CD14-positive monocyte (primary cell): ENCODE measurements at regions of chr6 and their contacts with region 1.

Region 1: DNA sequence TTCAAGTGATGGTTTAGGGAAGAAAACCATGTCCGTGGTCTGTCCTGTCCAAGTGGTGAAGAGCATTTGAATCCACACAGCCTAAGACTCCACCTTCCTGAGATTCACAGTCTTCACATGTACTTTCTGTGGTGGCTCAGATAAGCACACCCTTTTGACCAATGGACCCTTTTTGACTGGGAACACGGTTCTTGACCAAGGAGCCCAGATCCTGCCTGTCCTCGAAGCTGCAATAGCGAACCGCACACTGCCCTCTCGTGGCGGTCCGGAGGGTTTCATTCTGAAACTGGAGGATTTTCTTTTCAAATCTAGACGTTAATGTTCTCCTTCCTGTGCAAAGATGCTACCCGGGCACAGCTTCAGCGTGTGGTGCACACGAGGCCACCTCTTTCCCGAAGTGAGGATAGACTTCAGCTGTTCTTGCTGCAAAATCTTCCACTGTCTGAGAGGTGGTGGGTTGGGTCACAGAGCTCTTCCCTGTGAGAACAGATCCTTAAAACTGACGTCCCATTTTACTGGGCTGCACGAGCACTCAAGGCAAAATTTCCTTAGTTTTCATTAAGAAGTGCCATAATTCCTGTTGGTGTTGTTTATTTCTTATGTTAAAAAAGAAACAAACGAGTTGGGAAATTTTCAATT is 90.5 kb downstream of the SYNJ2 start:
- DNase-seq: peak; percentile 59 to 73 (median 72)
- H3K4me3 ChIP-seq: no peak overlapping the region
- H3K4me3 Mint-ChIP-seq: peak overlapping the region in 1 of 2 donors; percentile 48
- H3K27ac ChIP-seq: no peak overlapping the region
- H3K27ac Mint-ChIP-seq: peak overlapping the region in 4 of 7 donors; percentile 61 to 81 (median 70)
- H3K4me1 ChIP-seq: peaks cover 18 to 19% of the 10 kb centered on the region in 2 donors
- H3K4me1 Mint-ChIP-seq: peaks cover 20% of the 10 kb centered on the region
- H3K27me3 ChIP-seq: no peaks in the 10 kb centered on the region
- H3K27me3 Mint-ChIP-seq: peaks cover 0 to 3% (median 0%) of the 10 kb centered on the region in 3 donors
- CTCF ChIP-seq: peak; percentile 90

Region 2: DNA sequence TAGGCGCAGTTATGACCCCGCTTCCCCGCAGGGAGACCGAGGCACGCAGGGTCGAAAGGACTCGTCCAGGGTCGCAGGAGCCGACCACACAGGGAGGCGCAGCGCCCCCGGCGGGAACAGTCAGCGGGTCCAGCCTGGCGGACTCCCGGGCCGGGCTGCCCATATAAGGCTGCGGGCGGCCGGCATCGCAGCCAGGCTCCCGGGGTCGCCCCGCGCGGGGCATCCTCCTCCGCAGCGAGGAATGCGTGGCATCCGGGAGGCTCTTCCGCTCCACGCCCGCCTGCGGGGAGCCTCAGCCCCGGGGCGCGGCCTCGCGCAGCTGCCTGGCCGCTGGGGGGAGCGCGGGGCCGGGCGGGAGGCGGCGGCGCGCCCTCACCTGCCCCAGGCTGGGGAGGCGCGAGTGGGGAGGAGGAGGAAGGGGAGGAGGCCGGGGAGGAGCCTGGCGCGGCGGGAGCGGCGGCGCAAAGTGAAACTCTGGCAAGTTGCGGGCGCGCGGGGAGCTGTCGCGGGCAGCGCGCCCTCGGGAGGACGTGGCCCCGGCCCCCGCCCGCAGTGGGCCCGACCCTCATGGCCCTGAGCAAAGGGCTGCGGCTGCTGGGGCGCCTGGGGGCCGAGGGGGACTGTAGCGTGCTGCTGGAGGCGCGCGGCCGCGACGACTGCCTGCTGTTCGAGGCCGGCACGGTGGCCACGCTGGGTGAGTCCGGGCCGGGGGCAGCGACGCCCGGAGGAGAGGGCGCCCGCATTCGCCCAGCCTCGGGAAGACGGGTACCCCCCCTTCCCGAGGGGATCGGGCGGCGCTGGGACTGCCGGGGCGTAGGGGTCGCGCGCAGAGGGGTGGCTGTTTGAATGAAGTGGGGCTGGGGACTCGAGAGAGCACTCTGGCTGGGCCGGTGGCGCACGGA is 90.6 kb before region 1 on chr6 and contains the start of gene SYNJ2:
- intact Hi-C with region 1: loop called in 1 of 2 experiments (anchors 5 kb)
- DNase-seq: peak; percentile 35 to 60 (median 44)
- H3K4me3 ChIP-seq: peak within 1 kb of the TSS; percentile 45 to 82 (median 66)
- H3K4me3 Mint-ChIP-seq: peak within 1 kb of the TSS; percentile 85 to 91
- H3K27ac ChIP-seq: no peak within 1 kb of the TSS
- H3K27ac Mint-ChIP-seq: peak within 1 kb of the TSS in 3 of 7 donors; percentile 43 to 80 (median 73)
- H3K4me1 ChIP-seq: peaks cover 41% of the 10 kb centered on the region in 2 donors
- H3K4me1 Mint-ChIP-seq: peaks cover 50% of the 10 kb centered on the region
- H3K27me3 ChIP-seq: peaks cover 13 to 28% of the 10 kb centered on the region in 2 donors
- H3K27me3 Mint-ChIP-seq: peaks cover 33 to 64% (median 39%) of the 10 kb centered on the region in 3 donors
- CTCF ChIP-seq: peak; percentile 46
- polyA plus RNA-seq, gene SYNJ2: 0.82 to 2.0 (median 1.6) TPM

Region 3: DNA sequence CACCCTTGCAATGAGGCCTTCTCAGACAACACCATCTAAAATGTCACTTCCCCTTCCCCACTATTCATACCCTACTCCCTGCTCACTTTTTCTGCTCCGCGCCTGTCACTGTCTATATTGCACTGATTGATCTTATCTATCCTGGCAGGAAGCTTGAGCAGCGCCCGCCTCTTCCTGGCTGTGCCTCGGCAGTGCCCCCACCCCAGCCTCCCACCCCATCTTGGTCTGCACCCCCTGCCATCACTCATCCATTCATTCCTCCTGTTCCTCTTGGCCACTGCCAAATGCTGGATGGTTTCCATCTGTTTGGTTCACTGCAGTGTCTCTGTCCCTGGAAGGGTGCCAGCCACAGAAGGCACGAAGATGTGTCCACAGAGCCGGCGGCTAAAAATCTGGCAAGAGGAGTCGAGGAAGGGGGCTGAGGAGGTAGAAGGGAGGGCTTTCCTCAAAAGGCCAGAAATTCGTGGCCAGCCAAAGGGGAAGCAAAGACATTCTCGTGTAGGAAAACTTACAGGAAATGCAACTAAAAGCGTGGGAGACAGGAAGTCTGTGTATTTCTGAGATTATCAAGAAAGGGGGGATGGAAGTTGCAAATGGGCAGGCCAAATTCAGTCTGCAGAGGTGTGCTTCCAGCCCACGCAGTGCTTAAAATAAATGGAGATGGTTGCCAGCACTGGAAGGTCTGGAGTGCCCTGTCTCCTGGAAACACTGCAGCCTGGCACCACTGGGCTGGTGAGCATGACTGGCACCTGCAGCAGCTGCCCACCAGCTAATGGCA is 62.9 kb before region 1 on chr6:
- intact Hi-C with region 1: loop called in 1 of 2 experiments (anchors 5 kb)
- DNase-seq: peak; percentile 29 to 52 (median 40)
- H3K4me3 ChIP-seq: peak overlapping the region in 2 of 3 experiments; percentile 0 to 37
- H3K4me3 Mint-ChIP-seq: peak overlapping the region; percentile 58 to 86
- H3K27ac ChIP-seq: peak overlapping the region; percentile 13 to 24
- H3K27ac Mint-ChIP-seq: peak overlapping the region; percentile 69 to 93 (median 83)
- H3K4me1 ChIP-seq: peaks cover 28% of the 10 kb centered on the region in 2 donors
- H3K4me1 Mint-ChIP-seq: peaks cover 37% of the 10 kb centered on the region
- H3K27me3 ChIP-seq: no peaks in the 10 kb centered on the region
- H3K27me3 Mint-ChIP-seq: peaks cover 3 to 4% (median 3%) of the 10 kb centered on the region in 3 donors
- CTCF ChIP-seq: no peak

Region 4: GRCh38 chr6:158031381-158032353 is 40.5 kb before region 1 on chr6:
- intact Hi-C with region 1: loop called in 1 of 2 experiments (anchors 5 kb)
- DNase-seq: peak; percentile 97 to 98 (median 97)
- H3K4me3 ChIP-seq: peak overlapping the region in 2 of 3 experiments; percentile 2 to 51
- H3K4me3 Mint-ChIP-seq: peak overlapping the region; percentile 68 to 82
- H3K27ac ChIP-seq: peak overlapping the region; percentile 59 to 92
- H3K27ac Mint-ChIP-seq: peak overlapping the region; percentile 87 to 98 (median 96)
- H3K4me1 ChIP-seq: peaks cover 55 to 72% of the 10 kb centered on the region in 2 donors
- H3K4me1 Mint-ChIP-seq: peaks cover 46% of the 10 kb centered on the region
- H3K27me3 ChIP-seq: no peaks in the 10 kb centered on the region
- H3K27me3 Mint-ChIP-seq: peaks cover 0 to 8% (median 6%) of the 10 kb centered on the region in 3 donors
- CTCF ChIP-seq: no peak